Caco-2 (cell line): ENCODE measurements at regions of chr14 and their contacts with region 1.

Region 1: GRCh38 chr14:53444677-53445312 is 291.7 kb upstream of the DDHD1 start:
- DNase-seq: no peak
- H3K4me3 ChIP-seq: no peak overlapping the region
- H3K4me3 Mint-ChIP-seq: no peak overlapping the region
- H3K27ac Mint-ChIP-seq: no peak overlapping the region
- H3K4me1 ChIP-seq: peaks cover 31% of the 10 kb centered on the region
- H3K4me1 Mint-ChIP-seq: peaks cover 37% of the 10 kb centered on the region
- H3K27me3 ChIP-seq: no peaks in the 10 kb centered on the region
- H3K27me3 Mint-ChIP-seq: no peaks in the 10 kb centered on the region
- CTCF ChIP-seq: no peak

Region 2: GRCh38 chr14:53458368-53458814 is 13.6 kb after region 1 on chr14:
- CTCF ChIA-PET with region 1: interaction called, 3 read pairs
- POLR2A ChIA-PET with region 1: interaction called, 3 read pairs
- intact Hi-C with region 1: loop called (anchors 1 kb)
- DNase-seq: peak; percentile 74 to 75
- H3K4me3 ChIP-seq: no peak overlapping the region
- H3K4me3 Mint-ChIP-seq: peak overlapping the region; percentile 29
- H3K27ac Mint-ChIP-seq: peak overlapping the region; percentile 43
- H3K4me1 ChIP-seq: peaks cover 48% of the 10 kb centered on the region
- H3K4me1 Mint-ChIP-seq: peaks cover 40% of the 10 kb centered on the region
- H3K27me3 ChIP-seq: no peaks in the 10 kb centered on the region
- H3K27me3 Mint-ChIP-seq: no peaks in the 10 kb centered on the region
- CTCF ChIP-seq: no peak

Region 3: GRCh38 chr14:53493320-53494259 is 48.8 kb after region 1 on chr14:
- CTCF ChIA-PET with region 1: no interaction called
- POLR2A ChIA-PET with region 1: no interaction called
- intact Hi-C with region 1: no loop called
- DNase-seq: no peak
- H3K4me3 ChIP-seq: no peak overlapping the region
- H3K4me3 Mint-ChIP-seq: no peak overlapping the region
- H3K27ac Mint-ChIP-seq: no peak overlapping the region
- H3K4me1 ChIP-seq: no peaks in the 10 kb centered on the region
- H3K4me1 Mint-ChIP-seq: no peaks in the 10 kb centered on the region
- H3K27me3 ChIP-seq: no peaks in the 10 kb centered on the region
- H3K27me3 Mint-ChIP-seq: no peaks in the 10 kb centered on the region
- CTCF ChIP-seq: no peak

Region 4: DNA sequence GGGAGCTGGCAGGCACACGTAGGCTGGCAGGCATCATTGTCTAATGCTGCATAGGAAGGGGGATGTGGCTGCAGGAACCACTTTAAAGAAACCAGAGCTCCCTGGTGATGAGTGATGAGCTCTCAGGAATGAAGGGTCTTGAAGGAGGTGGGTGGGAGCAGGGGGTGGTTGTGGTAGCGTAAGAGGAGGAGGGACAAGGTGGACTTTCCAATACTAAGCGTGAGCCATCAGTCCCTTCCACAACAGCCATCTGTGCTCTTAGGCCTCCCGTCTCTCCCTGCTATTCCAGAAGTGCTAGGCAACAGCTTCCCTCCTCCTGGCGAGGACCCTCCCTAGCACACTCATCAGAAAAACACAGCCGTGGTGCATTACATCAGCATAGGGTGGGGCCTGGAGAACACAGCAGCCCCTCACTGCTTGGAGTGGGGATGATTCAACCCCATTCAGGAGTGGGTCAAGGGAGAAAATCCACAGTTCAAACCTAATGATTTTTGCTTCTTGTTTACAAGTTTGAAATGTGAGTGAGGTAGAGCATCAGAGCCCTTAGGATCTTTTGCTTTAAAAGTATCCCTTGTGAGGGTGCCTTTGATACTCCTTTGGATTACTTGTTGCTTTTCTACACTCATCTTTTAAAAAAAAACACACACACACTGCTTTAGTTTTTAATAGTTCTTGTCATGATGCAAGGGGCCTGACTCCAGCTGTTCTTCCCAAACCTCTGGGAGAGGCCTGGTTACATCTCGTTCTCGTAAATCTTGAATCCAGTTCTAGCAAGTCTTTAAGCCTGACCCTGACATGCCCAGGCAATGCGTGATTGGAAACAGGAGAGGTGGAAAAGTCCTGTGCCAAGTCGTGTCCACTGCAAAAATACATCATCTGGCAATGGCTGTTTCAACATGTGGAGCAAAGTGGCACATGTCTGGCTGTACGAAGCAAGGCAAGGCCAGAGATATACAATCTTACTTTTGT is 64.8 kb after region 1 on chr14:
- CTCF ChIA-PET with region 1: no interaction called
- POLR2A ChIA-PET with region 1: no interaction called
- intact Hi-C with region 1: no loop called
- DNase-seq: no peak
- H3K4me3 ChIP-seq: no peak overlapping the region
- H3K4me3 Mint-ChIP-seq: no peak overlapping the region
- H3K27ac Mint-ChIP-seq: no peak overlapping the region
- H3K4me1 ChIP-seq: no peaks in the 10 kb centered on the region
- H3K4me1 Mint-ChIP-seq: peaks cover 7% of the 10 kb centered on the region
- H3K27me3 ChIP-seq: no peaks in the 10 kb centered on the region
- H3K27me3 Mint-ChIP-seq: no peaks in the 10 kb centered on the region
- CTCF ChIP-seq: no peak